ENCODE measurements at regions of chr14 and their contacts with region 1.

Region 1: DNA sequence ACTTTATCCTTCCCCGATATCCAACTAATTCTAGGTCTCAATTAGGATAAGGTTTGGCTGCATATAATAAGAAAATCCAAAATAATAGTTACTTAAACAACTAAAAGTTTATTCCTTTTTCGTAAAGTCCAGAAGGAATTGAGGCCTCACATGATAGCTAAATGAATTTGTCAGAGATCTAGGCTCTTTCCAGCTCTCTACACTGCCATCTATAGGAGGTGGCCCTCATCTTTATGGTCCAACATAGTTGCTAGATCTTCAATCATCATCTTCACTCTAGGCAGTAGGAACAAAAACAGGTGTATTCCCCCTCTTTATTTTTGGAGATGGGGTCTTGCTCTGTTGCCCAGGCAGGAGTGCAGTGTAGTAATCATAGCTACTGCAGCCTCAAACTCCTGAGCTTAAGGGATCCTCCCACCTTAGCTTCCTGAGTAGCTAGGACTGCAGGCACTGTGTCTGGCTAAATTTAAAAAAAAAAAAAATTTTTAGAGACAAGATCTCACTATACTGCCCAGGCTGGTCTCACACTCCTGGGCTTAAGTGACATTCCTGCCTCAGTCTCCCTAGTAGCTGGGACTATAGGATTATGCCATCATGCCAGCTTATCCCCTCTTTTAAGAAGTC is 46.5 kb upstream of the SAV1 start:
- DNase-seq: no peak
- H3K4me3 Mint-ChIP-seq: no peak overlapping the region
- H3K27ac Mint-ChIP-seq: no peak overlapping the region
- H3K4me1 Mint-ChIP-seq: no peaks in the 10 kb centered on the region
- H3K27me3 Mint-ChIP-seq: peaks cover 2% of the 10 kb centered on the region

Region 2: GRCh38 chr14:50542941-50543418 is 171.6 kb before region 1 on chr14:
- intact Hi-C with region 1: loop called (anchors 5 kb)
- DNase-seq: peak; percentile 15
- H3K4me3 Mint-ChIP-seq: no peak overlapping the region
- H3K27ac Mint-ChIP-seq: no peak overlapping the region
- H3K4me1 Mint-ChIP-seq: peaks cover 16% of the 10 kb centered on the region
- H3K27me3 Mint-ChIP-seq: peaks cover 13% of the 10 kb centered on the region

Measured in activated T-helper 1 cell treated with anti-CD3 and anti-CD28 coated beads, Interleukin-12 subunit alpha, Interleukin-12 subunit beta, Interleukin-2, Interleukin-4 antibody, amounts not matched to agents 30 ng/mL and 10 ng/mL and 1 ng/mL, durations not matched to agents 14 hours and 24 hours and 36 hours (primary cell).